B cell (primary cell): ENCODE measurements at regions of chr1 and their contacts with region 1.

Region 1: GRCh38 chr1:115980998-115981993 is 5.0 kb downstream of the SLC22A15 start:
- DNase-seq: peak; percentile 53
- ATAC-seq: no peak
- H3K4me3 ChIP-seq: no peak overlapping the region
- H3K4me3 Mint-ChIP-seq: no peak overlapping the region
- H3K27ac ChIP-seq: no peak overlapping the region
- H3K27ac Mint-ChIP-seq: no peak overlapping the region
- H3K4me1 ChIP-seq: peaks cover 4 to 6% of the 10 kb centered on the region in 2 donors
- H3K4me1 Mint-ChIP-seq: peaks cover 16% of the 10 kb centered on the region
- H3K27me3 ChIP-seq: peaks cover 0 to 4% (median 0%) of the 10 kb centered on the region in 4 experiments
- H3K27me3 Mint-ChIP-seq: no peaks in the 10 kb centered on the region
- CTCF ChIP-seq: peak; percentile 74

Region 2: DNA sequence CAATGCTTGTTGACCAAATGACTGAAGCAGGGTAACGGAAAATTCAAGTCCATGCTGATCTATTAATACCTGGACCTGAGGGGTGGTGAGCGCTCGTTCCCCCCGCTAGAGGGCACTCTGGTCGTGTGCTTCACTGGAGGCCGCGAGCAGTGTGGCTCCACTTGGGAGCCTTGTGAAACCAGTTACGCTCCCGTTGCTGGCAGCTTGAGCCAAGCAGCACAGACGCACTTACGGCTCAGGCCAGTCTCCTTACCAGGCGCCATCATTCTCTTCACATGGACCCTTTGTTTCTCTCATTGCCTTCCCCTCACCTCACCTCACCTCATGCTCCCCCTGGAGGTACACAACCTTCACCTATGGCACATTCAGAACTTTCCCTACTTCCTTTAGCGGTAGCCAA is 842.3 kb before region 1 on chr1:
- CTCF ChIA-PET with region 1: interaction called, 17 read pairs
- POLR2A ChIA-PET with region 1: no interaction called
- intact Hi-C with region 1: no loop called
- DNase-seq: peak; percentile 63
- ATAC-seq: peak; percentile 76
- H3K4me3 ChIP-seq: no peak overlapping the region
- H3K4me3 Mint-ChIP-seq: peak overlapping the region; percentile 55
- H3K27ac ChIP-seq: no peak overlapping the region
- H3K27ac Mint-ChIP-seq: no peak overlapping the region
- H3K4me1 ChIP-seq: peaks cover 0 to 4% of the 10 kb centered on the region in 2 donors
- H3K4me1 Mint-ChIP-seq: peaks cover 4% of the 10 kb centered on the region
- H3K27me3 ChIP-seq: peaks cover 0 to 10% (median 3%) of the 10 kb centered on the region in 4 experiments
- H3K27me3 Mint-ChIP-seq: peaks cover 32% of the 10 kb centered on the region
- CTCF ChIP-seq: peak; percentile 83

Region 3: GRCh38 chr1:115717541-115717940 is 263.8 kb before region 1 on chr1:
- CTCF ChIA-PET with region 1: interaction called, 3 read pairs
- POLR2A ChIA-PET with region 1: no interaction called
- intact Hi-C with region 1: loop called (anchors 1 kb)
- DNase-seq: peak; percentile 26
- ATAC-seq: no peak
- H3K4me3 ChIP-seq: no peak overlapping the region
- H3K4me3 Mint-ChIP-seq: no peak overlapping the region
- H3K27ac ChIP-seq: no peak overlapping the region
- H3K27ac Mint-ChIP-seq: no peak overlapping the region
- H3K4me1 ChIP-seq: no peaks in the 10 kb centered on the region
- H3K4me1 Mint-ChIP-seq: no peaks in the 10 kb centered on the region
- H3K27me3 ChIP-seq: no peaks in the 10 kb centered on the region
- H3K27me3 Mint-ChIP-seq: peaks cover 16% of the 10 kb centered on the region
- CTCF ChIP-seq: peak; percentile 33

Region 4: GRCh38 chr1:115807723-115808122 is 173.6 kb before region 1 on chr1:
- CTCF ChIA-PET with region 1: interaction called, 59 read pairs
- POLR2A ChIA-PET with region 1: no interaction called
- intact Hi-C with region 1: no loop called
- DNase-seq: peak; percentile 52
- ATAC-seq: no peak
- H3K4me3 ChIP-seq: no peak overlapping the region
- H3K4me3 Mint-ChIP-seq: no peak overlapping the region
- H3K27ac ChIP-seq: no peak overlapping the region
- H3K27ac Mint-ChIP-seq: no peak overlapping the region
- H3K4me1 ChIP-seq: no peaks in the 10 kb centered on the region
- H3K4me1 Mint-ChIP-seq: no peaks in the 10 kb centered on the region
- H3K27me3 ChIP-seq: no peaks in the 10 kb centered on the region
- H3K27me3 Mint-ChIP-seq: peaks cover 13% of the 10 kb centered on the region
- CTCF ChIP-seq: peak; percentile 73

Region 5: DNA sequence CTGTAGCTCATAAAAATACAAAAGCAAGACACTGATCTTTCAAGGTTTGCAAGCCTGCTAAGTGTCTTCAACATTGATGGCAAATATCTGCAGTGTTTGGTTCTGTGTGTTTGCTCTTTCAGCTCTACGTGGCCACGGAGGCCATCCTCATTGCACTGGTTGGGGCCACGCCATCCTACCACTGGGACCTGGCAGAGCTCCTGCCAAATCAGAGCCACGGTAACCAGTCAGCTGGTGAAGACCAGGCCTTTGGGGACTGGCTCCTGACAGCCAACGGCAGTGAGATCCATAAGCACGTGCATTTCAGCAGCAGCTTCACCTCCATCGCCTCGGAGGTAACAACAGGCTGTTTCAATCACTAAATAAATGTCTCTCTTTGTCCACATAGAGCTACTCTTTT is 10.6 kb after region 1 on chr1:
- CTCF ChIA-PET with region 1: interaction called, 11 read pairs
- POLR2A ChIA-PET with region 1: no interaction called
- intact Hi-C with region 1: no loop called
- DNase-seq: no peak
- ATAC-seq: no peak
- H3K4me3 ChIP-seq: no peak overlapping the region
- H3K4me3 Mint-ChIP-seq: no peak overlapping the region
- H3K27ac ChIP-seq: no peak overlapping the region
- H3K27ac Mint-ChIP-seq: no peak overlapping the region
- H3K4me1 ChIP-seq: no peaks in the 10 kb centered on the region
- H3K4me1 Mint-ChIP-seq: no peaks in the 10 kb centered on the region
- H3K27me3 ChIP-seq: no peaks in the 10 kb centered on the region
- H3K27me3 Mint-ChIP-seq: no peaks in the 10 kb centered on the region
- CTCF ChIP-seq: no peak